CD8-positive, alpha-beta T cell (primary cell): ENCODE measurements at regions of chr12 and their contacts with region 1.

Region 1: DNA sequence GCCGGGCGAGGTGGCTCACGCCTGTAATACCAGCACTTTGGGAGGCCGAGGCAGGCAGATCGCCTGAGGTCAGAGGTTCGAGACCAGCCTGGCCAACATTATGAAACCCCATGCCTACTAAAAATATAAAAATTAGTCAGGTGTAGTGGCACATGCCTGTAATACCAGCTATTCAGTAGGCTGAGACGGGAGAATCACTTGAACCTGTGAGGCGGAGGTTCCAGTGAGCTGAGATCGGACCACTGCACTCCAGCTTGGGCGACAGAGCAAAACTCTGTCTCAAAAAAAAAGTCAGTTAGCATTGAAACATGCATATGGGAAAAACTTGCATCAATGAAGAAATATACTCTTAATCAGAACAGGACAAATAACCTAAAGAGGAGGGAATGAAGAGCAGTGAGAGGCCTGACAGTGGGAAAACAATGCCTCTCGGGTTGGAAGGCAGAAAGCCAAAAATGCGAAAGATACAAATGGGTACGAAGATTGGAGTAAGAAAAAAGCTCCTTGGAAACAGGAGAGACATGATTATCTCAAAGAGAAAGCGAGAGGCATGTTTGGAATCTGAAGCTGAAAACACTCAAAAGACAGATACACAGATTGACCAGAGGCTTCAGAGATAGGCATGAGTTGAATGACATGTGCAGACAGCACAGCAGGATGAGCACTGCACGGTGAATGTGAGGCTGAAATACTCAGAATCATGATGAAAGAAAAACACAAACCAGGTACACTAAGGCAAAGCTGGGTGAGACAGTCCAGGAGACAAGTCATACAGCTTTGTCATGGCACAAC is 30.6 kb downstream of the RESF1 start:
- DNase-seq: peak in 1 of 9 experiments; percentile 42
- ATAC-seq: no peak
- H3K4me3 ChIP-seq: no peak overlapping the region
- H3K4me3 Mint-ChIP-seq: no peak overlapping the region
- H3K27ac ChIP-seq: no peak overlapping the region
- H3K27ac Mint-ChIP-seq: peak overlapping the region; percentile 58
- H3K4me1 ChIP-seq: no peaks in the 10 kb centered on the region
- H3K4me1 Mint-ChIP-seq: peaks cover 40% of the 10 kb centered on the region
- H3K27me3 ChIP-seq: no peaks in the 10 kb centered on the region
- H3K27me3 Mint-ChIP-seq: no peaks in the 10 kb centered on the region
- CTCF ChIP-seq: no peak

Region 2: GRCh38 chr12:32002848-32003493 is 13.2 kb after region 1 on chr12:
- CTCF ChIA-PET with region 1: no interaction called
- POLR2A ChIA-PET with region 1: interaction called, 13 read pairs
- intact Hi-C with region 1: no loop called
- DNase-seq: no peak
- ATAC-seq: no peak
- H3K4me3 ChIP-seq: no peak overlapping the region
- H3K4me3 Mint-ChIP-seq: no peak overlapping the region
- H3K27ac ChIP-seq: peak overlapping the region in 1 of 2 experiments; percentile 46
- H3K27ac Mint-ChIP-seq: peak overlapping the region; percentile 46
- H3K4me1 ChIP-seq: no peaks in the 10 kb centered on the region
- H3K4me1 Mint-ChIP-seq: peaks cover 12% of the 10 kb centered on the region
- H3K27me3 ChIP-seq: no peaks in the 10 kb centered on the region
- H3K27me3 Mint-ChIP-seq: no peaks in the 10 kb centered on the region
- CTCF ChIP-seq: no peak